Ovary (tissue), 10 donors: ENCODE measurements at regions of chr1 and their contacts with region 1.

Region 1: DNA sequence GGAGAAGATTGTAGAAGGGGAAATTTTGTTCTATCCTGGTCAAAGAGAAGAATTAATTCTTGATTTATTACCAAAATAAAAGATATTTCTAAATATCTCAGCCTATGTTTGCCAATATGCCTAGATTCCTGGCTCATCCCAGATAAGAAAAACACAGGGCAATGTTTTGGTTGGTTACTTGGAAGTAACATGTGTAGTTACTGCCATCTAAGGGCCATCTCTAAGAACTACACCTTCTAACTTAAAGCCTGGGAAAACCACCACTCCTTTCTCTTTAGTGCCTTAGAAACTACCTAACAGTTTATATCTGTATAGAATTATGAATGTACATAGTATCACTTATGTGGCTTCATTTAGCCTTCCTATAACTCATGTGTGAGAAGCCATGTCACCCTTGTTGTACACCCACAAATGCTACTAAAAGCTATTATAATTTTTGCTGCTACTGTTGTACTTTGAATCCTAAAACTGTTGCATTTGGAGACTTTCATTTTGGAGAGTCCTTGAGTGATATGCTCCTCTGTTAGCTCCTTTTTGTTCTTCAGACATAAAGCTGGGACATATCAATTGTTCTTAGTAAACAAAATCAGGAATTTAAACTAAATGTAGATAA is 4.5 kb downstream of the AIM2 start:
- DNase-seq: no peak
- H3K4me3 ChIP-seq: no peak overlapping the region
- H3K27ac ChIP-seq: no peak overlapping the region
- H3K4me1 ChIP-seq: no peaks in the 10 kb centered on the region
- H3K27me3 ChIP-seq: no peaks in the 10 kb centered on the region
- CTCF ChIP-seq: peak; percentile 24 to 74 (median 50)
- EP300 ChIP-seq: no peak
- POLR2A ChIP-seq: no peak

Region 2: DNA sequence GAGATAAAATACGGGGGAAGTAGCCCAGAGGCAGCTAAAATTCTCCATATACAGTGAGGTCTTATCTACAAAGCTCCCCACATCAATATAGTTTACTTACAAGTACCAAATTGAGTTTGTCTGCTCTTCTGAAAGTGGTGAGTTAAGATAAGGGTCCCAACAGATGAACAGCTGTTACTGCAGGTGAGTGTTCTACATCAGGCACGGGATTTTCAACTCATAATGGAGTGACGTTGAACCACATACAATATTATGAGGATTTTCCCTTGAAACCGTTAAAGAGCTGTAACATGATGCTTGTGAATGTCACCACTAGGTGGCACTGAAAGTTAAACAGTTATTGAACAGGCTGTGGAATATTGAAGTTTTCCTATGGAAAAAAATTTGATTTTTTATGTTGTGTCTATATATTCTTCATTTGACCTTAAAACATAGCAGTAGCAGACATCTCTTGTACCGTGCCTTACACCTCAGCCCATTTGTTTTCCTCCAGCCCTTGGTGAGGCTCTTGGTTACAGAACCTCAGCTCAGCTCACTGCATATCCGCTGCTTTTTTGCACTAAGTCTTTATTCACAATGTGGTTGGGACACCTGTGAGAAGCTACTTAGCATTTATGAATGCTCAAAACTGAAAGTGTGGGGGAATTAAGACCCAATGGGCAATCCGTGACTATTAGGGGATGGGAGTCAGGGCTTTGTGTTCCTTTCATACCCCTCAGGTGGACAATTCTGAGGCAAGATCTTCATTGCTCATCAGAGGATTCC is 868.2 kb before region 1 on chr1:
- intact Hi-C with region 1: loop called in 3 of 4 experiments (anchors 5 to 10 kb)
- DNase-seq: peak in 1 of 5 donors; percentile 28
- H3K4me3 ChIP-seq: no peak overlapping the region
- H3K27ac ChIP-seq: no peak overlapping the region
- H3K4me1 ChIP-seq: no peaks in the 10 kb centered on the region
- H3K27me3 ChIP-seq: no peaks in the 10 kb centered on the region
- CTCF ChIP-seq: peak; percentile 47 to 70 (median 55)
- EP300 ChIP-seq: no peak
- POLR2A ChIP-seq: no peak

Region 3: GRCh38 chr1:158212320-158212719 is 859.8 kb before region 1 on chr1:
- intact Hi-C with region 1: loop called in 2 of 4 experiments (anchors 5 to 10 kb)
- DNase-seq: no peak
- H3K4me3 ChIP-seq: no peak overlapping the region
- H3K27ac ChIP-seq: no peak overlapping the region
- H3K4me1 ChIP-seq: no peaks in the 10 kb centered on the region
- H3K27me3 ChIP-seq: no peaks in the 10 kb centered on the region
- CTCF ChIP-seq: no peak
- EP300 ChIP-seq: no peak
- POLR2A ChIP-seq: no peak

Region 4: DNA sequence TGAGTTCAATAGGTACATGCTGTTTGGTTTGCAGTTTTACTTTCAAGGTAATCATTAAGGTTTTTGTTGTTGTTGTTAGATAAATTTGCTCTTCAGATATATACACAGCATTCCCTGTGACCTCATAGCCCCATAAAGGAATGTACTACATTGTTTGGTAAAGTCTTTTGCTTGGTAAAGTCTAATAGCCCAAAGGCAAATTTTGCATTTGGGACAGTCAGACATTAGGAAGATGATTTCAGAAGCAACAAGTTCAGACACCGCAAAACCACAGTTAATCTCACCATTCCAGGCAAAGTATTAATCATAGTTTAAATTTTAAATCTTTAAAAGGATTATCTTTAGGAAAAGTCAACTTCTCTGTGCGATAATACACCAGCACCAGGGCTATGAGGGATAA is 173.4 kb before region 1 on chr1:
- intact Hi-C with region 1: no loop called
- DNase-seq: no peak
- H3K4me3 ChIP-seq: no peak overlapping the region
- H3K27ac ChIP-seq: no peak overlapping the region
- H3K4me1 ChIP-seq: no peaks in the 10 kb centered on the region
- H3K27me3 ChIP-seq: no peaks in the 10 kb centered on the region
- CTCF ChIP-seq: no peak
- EP300 ChIP-seq: no peak
- POLR2A ChIP-seq: no peak

Region 5: GRCh38 chr1:159598196-159598595 is 526.1 kb after region 1 on chr1:
- intact Hi-C with region 1: no loop called
- DNase-seq: no peak
- H3K4me3 ChIP-seq: no peak overlapping the region
- H3K27ac ChIP-seq: no peak overlapping the region
- H3K4me1 ChIP-seq: no peaks in the 10 kb centered on the region
- H3K27me3 ChIP-seq: no peaks in the 10 kb centered on the region
- CTCF ChIP-seq: no peak
- EP300 ChIP-seq: no peak
- POLR2A ChIP-seq: no peak